ENCODE measurements at regions of chr1 and their contacts with region 1.

Region 1: DNA sequence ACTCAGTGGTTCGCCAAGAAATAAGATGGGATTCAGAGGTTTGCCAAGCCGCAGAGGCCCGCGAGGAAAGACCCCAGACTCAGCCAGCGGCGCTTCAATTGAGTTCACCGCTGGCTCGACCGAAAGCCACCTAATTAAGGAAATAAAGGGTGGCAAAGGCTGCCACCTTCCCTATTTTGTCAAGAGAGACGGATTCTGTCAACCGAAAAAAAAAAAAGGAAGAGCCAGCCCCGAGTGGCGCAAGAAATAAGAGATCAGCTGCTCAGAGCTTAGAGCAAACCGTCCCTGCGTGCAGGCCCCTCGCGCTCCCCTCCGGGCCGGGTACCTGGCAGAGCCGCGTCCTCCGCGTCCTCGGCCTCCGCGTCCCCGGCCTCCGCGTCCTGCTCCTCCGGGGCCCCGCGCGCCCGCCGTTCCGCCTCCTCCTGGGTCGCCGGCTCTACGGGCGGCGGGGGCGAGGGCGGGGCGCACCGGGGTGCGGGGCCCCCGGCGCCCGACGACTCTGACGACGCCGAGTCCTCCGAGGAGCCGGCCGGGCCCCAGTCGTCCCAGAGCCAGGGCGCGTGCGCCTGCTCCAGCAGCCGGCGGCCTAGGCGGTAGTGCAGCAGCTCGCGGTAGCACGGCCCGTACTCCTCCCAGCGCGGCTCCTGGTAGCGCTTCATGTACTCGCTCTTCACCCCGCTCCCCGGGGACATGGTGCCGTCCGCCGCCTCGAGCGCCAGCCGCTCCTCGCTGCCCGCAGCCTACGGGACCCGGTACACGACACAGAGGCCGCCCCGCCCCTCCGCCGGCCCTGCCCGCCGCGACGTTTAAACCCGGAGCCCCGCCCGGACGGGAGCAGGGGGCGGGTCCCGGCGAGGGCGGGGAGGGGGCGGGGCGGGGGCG is 832 bp downstream of the CCSAP start:
- DNase-seq: peak; percentile 77 to 86 (median 84)
- H3K4me3 ChIP-seq: peak overlapping the region; percentile 98
- H3K27ac ChIP-seq: peak overlapping the region; percentile 80 to 96
- H3K4me1 ChIP-seq: peaks cover 2% of the 10 kb centered on the region
- H3K27me3 ChIP-seq: no peaks in the 10 kb centered on the region
- CTCF ChIP-seq: no peak
- EP300 ChIP-seq: no peak
- POLR2A ChIP-seq: no peak

Region 2: GRCh38 chr1:228935855-228936727 is 405.9 kb before region 1 on chr1:
- intact Hi-C with region 1: no loop called
- DNase-seq: no peak
- H3K4me3 ChIP-seq: no peak overlapping the region
- H3K27ac ChIP-seq: no peak overlapping the region
- H3K4me1 ChIP-seq: no peaks in the 10 kb centered on the region
- H3K27me3 ChIP-seq: no peaks in the 10 kb centered on the region
- CTCF ChIP-seq: no peak
- EP300 ChIP-seq: no peak
- POLR2A ChIP-seq: no peak

Region 3: DNA sequence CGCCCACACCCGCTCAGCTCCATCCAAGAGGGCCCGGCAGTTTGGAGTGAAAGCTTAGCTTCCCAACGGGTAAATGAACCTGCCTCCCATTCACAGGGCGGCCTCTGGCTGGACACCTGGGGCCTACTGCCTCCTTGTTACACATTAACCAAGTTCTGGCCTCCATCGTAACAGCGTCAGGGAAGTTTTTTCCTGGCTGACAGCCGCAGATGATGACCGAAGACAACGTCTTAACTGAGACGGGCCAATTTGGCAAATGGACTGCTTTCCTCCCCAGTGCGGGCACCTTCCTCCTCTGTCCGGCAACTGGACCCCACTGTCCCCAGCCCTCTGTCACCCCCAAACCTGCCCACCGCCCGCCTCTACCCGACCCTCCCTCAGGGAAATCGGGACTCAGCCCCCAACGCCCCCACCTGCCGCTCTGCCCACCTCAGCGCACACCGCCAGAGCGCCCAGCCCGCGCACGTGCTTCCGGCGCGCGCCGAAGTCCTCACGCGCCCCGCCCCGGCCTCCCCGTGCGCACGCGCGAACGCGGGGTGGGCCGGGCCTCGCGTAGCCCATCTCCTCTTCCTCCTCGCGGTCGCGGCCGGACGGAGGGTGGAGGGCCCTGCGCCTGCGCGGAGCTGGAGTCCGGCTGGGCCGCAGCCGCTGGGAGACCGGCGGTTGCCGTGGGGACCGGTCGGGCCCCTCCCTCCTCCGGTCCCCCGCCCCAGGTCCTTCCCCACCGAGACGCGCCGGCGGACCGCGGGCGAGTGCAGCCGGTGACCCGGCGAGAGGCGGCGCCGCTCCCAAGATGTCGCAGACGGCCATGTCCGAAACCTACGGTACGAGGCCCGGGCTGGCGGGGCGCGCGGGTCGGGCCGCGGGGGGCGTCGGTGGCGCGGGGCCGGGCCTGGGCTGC is 71.2 kb before region 1 on chr1 and contains the start of gene RAB4A:
- intact Hi-C with region 1: loop called in 1 of 4 experiments (anchors 10 kb)
- DNase-seq: peak; percentile 81 to 90 (median 86)
- H3K4me3 ChIP-seq: peak within 1 kb of the TSS; percentile 74
- H3K27ac ChIP-seq: peak within 1 kb of the TSS; percentile 76 to 91
- H3K4me1 ChIP-seq: peaks cover 3% of the 10 kb centered on the region
- H3K27me3 ChIP-seq: no peaks in the 10 kb centered on the region
- CTCF ChIP-seq: no peak
- EP300 ChIP-seq: no peak
- POLR2A ChIP-seq: peak; percentile 55
- total RNA-seq, gene RAB4A: 19.5 to 69.2 (median 62.3) TPM

Region 4: GRCh38 chr1:229452956-229453801 is 111.2 kb after region 1 on chr1:
- intact Hi-C with region 1: loop called in 1 of 4 experiments (anchors 5 kb)
- DNase-seq: no peak
- H3K4me3 ChIP-seq: no peak overlapping the region
- H3K27ac ChIP-seq: no peak overlapping the region
- H3K4me1 ChIP-seq: peaks cover 2% of the 10 kb centered on the region
- H3K27me3 ChIP-seq: no peaks in the 10 kb centered on the region
- CTCF ChIP-seq: no peak
- EP300 ChIP-seq: no peak
- POLR2A ChIP-seq: no peak

Measured in ovary (tissue), 10 donors.